Activated CD4-positive, alpha-beta T cell treated with anti-CD3 and anti-CD28 coated beads for 36 hours (primary cell): ENCODE measurements at regions of chr3 and their contacts with region 1.

Region 1: GRCh38 chr3:69410250-69410649 is 24.4 kb upstream of the FRMD4B start:
- DNase-seq: peak; percentile 82
- ATAC-seq: peak; percentile 98
- H3K4me3 Mint-ChIP-seq: no peak overlapping the region
- H3K27ac Mint-ChIP-seq: no peak overlapping the region
- H3K4me1 Mint-ChIP-seq: peaks cover 4% of the 10 kb centered on the region
- H3K27me3 Mint-ChIP-seq: peaks cover 3% of the 10 kb centered on the region

Region 2: GRCh38 chr3:69425261-69425660 is 15.0 kb after region 1 on chr3:
- CTCF ChIA-PET with region 1: interaction called, 12 read pairs
- POLR2A ChIA-PET with region 1: no interaction called
- intact Hi-C with region 1: no loop called
- DNase-seq: peak; percentile 52
- ATAC-seq: peak; percentile 74
- H3K4me3 Mint-ChIP-seq: no peak overlapping the region
- H3K27ac Mint-ChIP-seq: no peak overlapping the region
- H3K4me1 Mint-ChIP-seq: peaks cover 2% of the 10 kb centered on the region
- H3K27me3 Mint-ChIP-seq: peaks cover 5% of the 10 kb centered on the region

Region 3: DNA sequence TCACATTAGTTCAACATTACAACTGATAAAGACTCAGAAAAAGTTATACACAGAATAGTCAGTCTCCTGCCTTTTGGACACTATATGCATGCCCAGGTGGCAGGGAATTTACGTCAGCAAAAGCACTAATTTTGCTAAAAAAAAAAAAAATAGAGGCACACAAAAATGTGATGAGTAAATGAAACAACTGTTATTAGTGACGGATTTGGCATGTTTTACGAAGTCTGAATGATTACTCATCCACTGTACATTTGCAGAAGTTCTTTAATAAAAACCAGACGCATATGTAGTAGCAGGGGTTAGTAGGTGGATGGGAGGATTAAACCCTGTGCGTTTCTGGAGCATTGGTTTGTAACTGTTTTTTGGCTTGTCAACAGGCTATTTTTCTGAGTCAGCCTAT is 428.0 kb after region 1 on chr3:
- CTCF ChIA-PET with region 1: no interaction called
- POLR2A ChIA-PET with region 1: no interaction called
- intact Hi-C with region 1: no loop called
- DNase-seq: no peak
- ATAC-seq: no peak
- H3K4me3 Mint-ChIP-seq: no peak overlapping the region
- H3K27ac Mint-ChIP-seq: no peak overlapping the region
- H3K4me1 Mint-ChIP-seq: no peaks in the 10 kb centered on the region
- H3K27me3 Mint-ChIP-seq: no peaks in the 10 kb centered on the region